ENCODE measurements at regions of chr2 and their contacts with region 1.

Region 1: DNA sequence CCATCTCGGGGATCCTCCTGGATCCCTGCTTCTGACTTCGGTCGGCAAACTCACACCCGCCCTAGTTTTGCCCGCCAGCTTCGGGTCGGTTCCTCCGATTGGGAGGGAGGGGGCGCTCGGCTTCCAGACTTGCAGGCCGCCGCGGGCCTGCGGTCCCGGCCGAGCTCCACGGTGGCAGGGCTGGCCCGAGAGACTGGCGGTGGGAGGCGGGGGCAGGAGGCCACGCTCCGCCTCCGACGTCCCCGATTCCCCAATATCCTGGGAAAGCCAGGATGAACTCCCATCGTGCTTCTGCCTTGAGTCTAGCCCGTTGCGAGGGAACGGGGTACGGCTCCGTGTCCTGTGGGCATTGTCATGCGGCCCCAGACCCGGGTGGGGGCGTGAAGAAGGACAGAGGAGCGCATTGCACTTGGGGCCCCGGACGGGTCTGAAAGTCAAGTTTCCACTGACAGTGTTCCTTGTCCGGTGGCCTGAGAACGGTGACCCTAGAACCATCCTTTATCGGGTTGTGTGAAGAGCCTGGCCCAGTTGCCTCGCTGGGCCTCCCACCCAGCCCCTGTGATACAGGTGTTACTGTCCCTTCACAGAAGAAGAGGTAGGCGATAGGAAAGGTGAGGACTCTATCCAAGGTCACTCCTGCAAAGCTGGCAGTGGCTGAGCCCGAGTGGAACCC is 2.4 kb upstream of the INHBB start:
- DNase-seq: peak; percentile 13
- ATAC-seq: peak; percentile 76
- H3K4me3 ChIP-seq: peak overlapping the region; percentile 8 to 57; a peak in 3 of 4 replicates
- H3K27ac ChIP-seq: 0 out of 2 replicates have a peak overlapping the region, but pooled peaks have one; percentile 34
- H3K4me1 ChIP-seq: peaks cover 12% of the 10 kb centered on the region
- H3K27me3 ChIP-seq: no peaks in the 10 kb centered on the region
- CTCF ChIP-seq: peak; percentile 92

Region 2: GRCh38 chr2:119744298-119744939 is 599.1 kb before region 1 on chr2:
- CTCF ChIA-PET with region 1: no interaction called
- POLR2A ChIA-PET with region 1: no interaction called
- in situ Hi-C with region 1: no loop called
- intact Hi-C with region 1: no loop called
- DNase-seq: no peak
- ATAC-seq: peak; percentile 50; the same call in 1 of the 2 replicates
- H3K4me3 ChIP-seq: no peak overlapping the region
- H3K27ac ChIP-seq: no peak overlapping the region
- H3K4me1 ChIP-seq: no peaks in the 10 kb centered on the region
- H3K27me3 ChIP-seq: peaks cover 8% of the 10 kb centered on the region; the same call in 1 of the 2 replicates
- CTCF ChIP-seq: no peak

Region 3: GRCh38 chr2:119879502-119879901 is 464.1 kb before region 1 on chr2:
- CTCF ChIA-PET with region 1: no interaction called
- POLR2A ChIA-PET with region 1: interaction called, 11 read pairs
- in situ Hi-C with region 1: no loop called
- intact Hi-C with region 1: no loop called
- DNase-seq: no peak
- ATAC-seq: no peak
- H3K4me3 ChIP-seq: no peak overlapping the region
- H3K27ac ChIP-seq: no peak overlapping the region
- H3K4me1 ChIP-seq: no peaks in the 10 kb centered on the region
- H3K27me3 ChIP-seq: no peaks in the 10 kb centered on the region
- CTCF ChIP-seq: no peak

Region 4: GRCh38 chr2:120161190-120161589 is 182.4 kb before region 1 on chr2:
- CTCF ChIA-PET with region 1: no interaction called
- POLR2A ChIA-PET with region 1: no interaction called
- in situ Hi-C with region 1: no loop called
- intact Hi-C with region 1: no loop called
- DNase-seq: no peak
- ATAC-seq: no peak
- H3K4me3 ChIP-seq: no peak overlapping the region
- H3K27ac ChIP-seq: no peak overlapping the region
- H3K4me1 ChIP-seq: no peaks in the 10 kb centered on the region
- H3K27me3 ChIP-seq: no peaks in the 10 kb centered on the region
- CTCF ChIP-seq: no peak

Region 5: GRCh38 chr2:120330946-120331822 is 12.4 kb before region 1 on chr2:
- CTCF ChIA-PET with region 1: interaction called, 10 read pairs
- POLR2A ChIA-PET with region 1: no interaction called
- in situ Hi-C with region 1: no loop called
- intact Hi-C with region 1: no loop called
- DNase-seq: no peak
- ATAC-seq: no peak
- H3K4me3 ChIP-seq: no peak overlapping the region
- H3K27ac ChIP-seq: no peak overlapping the region
- H3K4me1 ChIP-seq: no peaks in the 10 kb centered on the region
- H3K27me3 ChIP-seq: no peaks in the 10 kb centered on the region
- CTCF ChIP-seq: no peak

Region 6: DNA sequence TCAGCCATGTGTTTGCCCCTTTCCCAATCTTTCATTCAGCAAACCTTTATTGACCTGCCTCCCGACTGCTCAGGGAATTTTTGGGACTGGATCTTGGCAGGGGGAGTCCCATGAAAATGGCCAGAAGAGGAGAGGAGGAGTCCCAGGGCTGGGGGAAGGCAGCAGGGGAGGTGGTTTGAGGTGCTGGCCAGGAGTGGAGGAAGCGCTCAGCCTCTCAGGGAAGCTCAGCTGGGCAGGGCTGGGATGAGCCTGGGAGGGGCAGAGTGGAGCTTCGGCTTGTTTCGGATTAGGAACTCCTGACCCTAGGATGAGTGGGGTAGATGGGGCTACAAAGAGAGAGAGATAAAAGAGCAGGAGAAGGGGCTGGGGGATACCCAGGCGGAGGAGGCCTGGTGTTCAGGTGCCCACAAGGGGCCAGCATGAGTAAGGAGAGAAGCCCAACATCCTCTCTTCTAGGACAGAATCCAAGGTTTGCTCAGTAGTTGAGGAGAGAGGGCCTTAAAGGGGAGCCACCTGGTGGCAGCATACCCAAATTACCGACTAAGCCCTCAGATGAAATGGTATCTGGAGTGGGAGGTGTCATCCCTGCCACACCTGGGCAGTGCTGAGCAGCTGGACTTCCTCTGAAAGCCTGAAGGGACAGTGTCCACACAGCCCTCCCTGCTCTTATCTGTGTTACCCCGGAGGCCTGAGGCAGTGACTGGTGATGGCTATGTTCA is 93.5 kb after region 1 on chr2:
- CTCF ChIA-PET with region 1: interaction called, 4 read pairs
- POLR2A ChIA-PET with region 1: no interaction called
- in situ Hi-C with region 1: no loop called
- intact Hi-C with region 1: loop called (anchors 5 kb)
- DNase-seq: peak; percentile 25
- ATAC-seq: peak; percentile 85
- H3K4me3 ChIP-seq: no peak overlapping the region
- H3K27ac ChIP-seq: 0 out of 2 replicates have a peak overlapping the region, but pooled peaks have one; percentile 54
- H3K4me1 ChIP-seq: no peaks in the 10 kb centered on the region; the same call in 1 of the 2 replicates
- H3K27me3 ChIP-seq: no peaks in the 10 kb centered on the region
- CTCF ChIP-seq: peak; percentile 79; the same call in 1 of the 2 replicates

Region 7: DNA sequence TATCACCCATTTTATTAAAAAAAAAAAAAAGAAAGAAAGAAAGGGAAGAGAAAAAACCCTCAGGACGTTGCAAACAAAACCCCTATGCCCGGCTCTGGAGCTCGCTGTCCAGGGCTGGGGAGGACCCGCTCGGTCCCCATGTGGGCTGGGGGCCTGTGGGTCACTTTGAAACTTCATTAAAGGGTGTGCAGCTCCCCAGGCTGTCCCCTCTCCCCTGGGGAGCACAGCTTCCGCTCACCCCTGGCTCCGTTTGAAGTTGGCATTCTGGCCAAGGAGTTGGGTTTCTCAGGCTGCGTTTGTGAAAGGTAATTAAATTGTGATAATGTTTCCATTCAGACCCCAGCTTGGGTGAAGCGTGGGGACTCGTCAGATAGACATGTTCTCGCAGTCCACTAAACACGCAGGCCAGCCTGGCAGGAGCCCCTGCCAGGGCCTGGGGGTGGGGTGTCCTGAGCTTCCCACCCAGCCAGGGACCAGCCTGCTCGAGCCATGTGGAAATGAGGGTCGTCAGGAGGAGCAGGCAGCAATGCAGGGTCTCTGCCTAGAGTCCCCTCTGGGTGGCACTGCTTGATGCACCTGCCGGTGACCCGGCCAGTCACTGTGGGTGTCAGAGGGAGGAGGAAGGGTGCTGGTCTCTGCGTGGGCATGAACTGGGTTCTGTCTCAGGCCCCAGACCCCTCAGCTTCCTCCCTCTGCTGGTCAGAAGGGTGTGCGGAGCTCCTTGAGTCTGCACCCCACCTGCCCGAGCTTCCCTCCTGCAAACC is 168.6 kb after region 1 on chr2:
- CTCF ChIA-PET with region 1: no interaction called
- POLR2A ChIA-PET with region 1: no interaction called
- in situ Hi-C with region 1: no loop called
- intact Hi-C with region 1: loop called (anchors 10 kb)
- DNase-seq: no peak
- ATAC-seq: no peak; the same call in 1 of the 2 replicates
- H3K4me3 ChIP-seq: no peak overlapping the region
- H3K27ac ChIP-seq: no peak overlapping the region
- H3K4me1 ChIP-seq: no peaks in the 10 kb centered on the region
- H3K27me3 ChIP-seq: peaks cover 3% of the 10 kb centered on the region; the same call in 1 of the 2 replicates
- CTCF ChIP-seq: no peak

Region 8: DNA sequence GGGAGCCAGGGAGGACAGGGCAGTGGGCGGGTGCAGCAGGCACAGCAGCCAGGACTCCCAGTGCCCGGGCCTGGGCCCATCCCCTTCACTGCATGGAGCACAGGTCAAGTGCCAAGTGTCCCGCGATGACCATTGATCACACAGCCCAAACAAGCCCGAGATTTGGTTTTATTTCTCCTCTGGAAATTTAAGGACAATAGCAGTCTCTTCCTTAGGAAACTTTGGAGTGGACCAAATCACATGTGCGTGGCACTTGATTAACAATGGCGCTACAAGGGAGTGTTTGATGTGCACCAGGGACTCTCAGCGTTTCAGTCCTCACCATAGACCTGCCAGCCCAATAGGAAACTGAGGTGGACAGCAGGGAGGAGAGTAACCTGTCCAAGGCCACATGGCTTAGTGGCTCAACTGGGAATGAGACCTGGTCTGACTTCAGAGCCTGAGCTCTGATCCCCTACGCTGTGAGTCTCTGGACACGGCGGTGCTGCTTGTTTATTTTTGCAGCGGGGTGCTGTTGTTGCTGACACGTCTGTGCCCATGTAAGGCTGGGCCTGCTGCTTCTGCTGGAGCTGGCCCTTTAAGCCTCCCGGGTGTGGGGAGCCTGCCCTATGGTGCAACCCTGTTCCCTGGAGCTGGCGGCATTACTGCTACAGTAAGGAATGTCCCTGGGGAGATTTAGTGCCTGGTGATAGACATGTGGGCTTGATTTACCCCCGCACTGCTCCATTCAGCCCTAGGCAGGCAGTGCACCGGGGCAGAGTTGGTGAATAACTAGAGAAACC is 196.6 kb after region 1 on chr2:
- CTCF ChIA-PET with region 1: no interaction called
- POLR2A ChIA-PET with region 1: no interaction called
- in situ Hi-C with region 1: no loop called
- intact Hi-C with region 1: no loop called
- DNase-seq: no peak
- ATAC-seq: peak; percentile 57
- H3K4me3 ChIP-seq: no peak overlapping the region
- H3K27ac ChIP-seq: no peak overlapping the region
- H3K4me1 ChIP-seq: no peaks in the 10 kb centered on the region
- H3K27me3 ChIP-seq: no peaks in the 10 kb centered on the region; the same call in 1 of the 2 replicates
- CTCF ChIP-seq: no peak

Region 9: GRCh38 chr2:120680136-120680761 is 336.7 kb after region 1 on chr2:
- CTCF ChIA-PET with region 1: interaction called, 11 read pairs
- POLR2A ChIA-PET with region 1: interaction called, 3 read pairs
- in situ Hi-C with region 1: no loop called
- intact Hi-C with region 1: loop called (anchors 2 kb)
- DNase-seq: no peak
- ATAC-seq: peak; percentile 88
- H3K4me3 ChIP-seq: peak overlapping the region in 1 of 2 experiments; percentile 15; a peak in 1 of 4 replicates
- H3K27ac ChIP-seq: no peak overlapping the region
- H3K4me1 ChIP-seq: 0 out of 2 replicates have a peak, but pooled peaks cover 2% of the 10 kb centered on the region
- H3K27me3 ChIP-seq: peaks cover 5% of the 10 kb centered on the region
- CTCF ChIP-seq: peak; percentile 82

Region 10: GRCh38 chr2:121076885-121077549 is 733.4 kb after region 1 on chr2:
- CTCF ChIA-PET with region 1: no interaction called
- POLR2A ChIA-PET with region 1: no interaction called
- in situ Hi-C with region 1: no loop called
- intact Hi-C with region 1: loop called (anchors 10 kb)
- DNase-seq: no peak
- ATAC-seq: peak; percentile 59
- H3K4me3 ChIP-seq: no peak overlapping the region
- H3K27ac ChIP-seq: no peak overlapping the region
- H3K4me1 ChIP-seq: peaks cover 13% of the 10 kb centered on the region
- H3K27me3 ChIP-seq: no peaks in the 10 kb centered on the region
- CTCF ChIP-seq: peak; percentile 99